Left colon (tissue), 2 donors: ENCODE measurements at regions of chr13 and their contacts with region 1.

Region 1: GRCh38 chr13:32381539-32381938 is 46.4 kb downstream of the N4BP2L1 start:
- DNase-seq: no peak
- ATAC-seq: peak; percentile 71

Region 2: GRCh38 chr13:32045982-32046785 is 335.4 kb before region 1 on chr13:
- intact Hi-C with region 1: no loop called
- DNase-seq: no peak
- ATAC-seq: peak; percentile 77

Region 3: GRCh38 chr13:32555613-32556012 is 174.1 kb after region 1 on chr13:
- intact Hi-C with region 1: loop called in 1 of 2 experiments (anchors 10 kb)
- DNase-seq: no peak
- ATAC-seq: no peak

Region 4: GRCh38 chr13:32984846-32985544 is 603.5 kb after region 1 on chr13:
- intact Hi-C with region 1: no loop called
- DNase-seq: peak; percentile 21 to 54
- ATAC-seq: peak; percentile 48